ENCODE measurements at regions of chr7 and their contacts with region 1.

Region 1: GRCh38 chr7:123635551-123636359 is 19.9 kb upstream of the LMOD2 start:
- DNase-seq: peak; percentile 72
- H3K4me3 ChIP-seq: no peak overlapping the region; a peak in 1 of 4 replicates
- H3K27ac ChIP-seq: no peak overlapping the region
- H3K4me1 ChIP-seq: peaks cover 3 to 4% of the 10 kb centered on the region in 2 experiments; a peak in 2 of 4 replicates
- H3K27me3 ChIP-seq: no peaks in the 10 kb centered on the region
- CTCF ChIP-seq: peak; percentile 92
- EP300 ChIP-seq: no peak
- RAD21 ChIP-seq: peak; percentile 98

Region 2: GRCh38 chr7:123624527-123625183 is 11.1 kb before region 1 on chr7:
- CTCF ChIA-PET with region 1: interaction called, 20 read pairs
- POLR2A ChIA-PET with region 1: no interaction called
- DNase-seq: peak; percentile 35
- H3K4me3 ChIP-seq: 0 out of 4 replicates have a peak overlapping the region, but pooled peaks of 1 of the 2 experiments have one; percentile 25
- H3K27ac ChIP-seq: no peak overlapping the region
- H3K4me1 ChIP-seq: peaks cover 0 to 11% of the 10 kb centered on the region in 2 experiments; a peak in 2 of 4 replicates
- H3K27me3 ChIP-seq: no peaks in the 10 kb centered on the region
- CTCF ChIP-seq: peak; percentile 56
- EP300 ChIP-seq: no peak
- RAD21 ChIP-seq: peak; percentile 17; the same call in 1 of the 2 replicates

Region 3: DNA sequence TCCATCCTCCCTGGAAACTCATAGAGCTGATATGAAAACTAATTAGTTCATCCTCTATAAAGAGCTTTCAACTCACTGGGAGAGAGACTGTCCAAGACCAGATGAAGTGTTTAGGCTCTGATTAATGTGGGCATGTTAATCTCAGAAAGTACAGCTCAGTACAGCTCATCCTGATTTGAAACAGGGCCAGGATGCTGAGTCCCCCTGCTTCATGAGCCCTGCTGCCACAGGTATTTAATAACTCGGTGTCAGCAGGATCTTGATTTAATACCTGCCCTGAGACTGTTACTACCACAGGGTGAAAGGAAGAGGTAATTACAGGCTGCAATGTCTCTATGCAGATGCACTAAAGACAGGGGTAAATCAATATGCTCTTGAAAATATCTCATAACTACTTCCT is 30.7 kb after region 1 on chr7:
- CTCF ChIA-PET with region 1: interaction called, 17 read pairs
- POLR2A ChIA-PET with region 1: no interaction called
- DNase-seq: peak; percentile 30
- H3K4me3 ChIP-seq: no peak overlapping the region
- H3K27ac ChIP-seq: no peak overlapping the region
- H3K4me1 ChIP-seq: peaks cover 0 to 10% of the 10 kb centered on the region in 2 experiments; a peak in 2 of 4 replicates
- H3K27me3 ChIP-seq: no peaks in the 10 kb centered on the region
- CTCF ChIP-seq: no peak
- EP300 ChIP-seq: 0 out of 4 replicates have a peak, but pooled peaks of 1 of the 2 experiments have one; percentile 35
- RAD21 ChIP-seq: no peak

Region 4: DNA sequence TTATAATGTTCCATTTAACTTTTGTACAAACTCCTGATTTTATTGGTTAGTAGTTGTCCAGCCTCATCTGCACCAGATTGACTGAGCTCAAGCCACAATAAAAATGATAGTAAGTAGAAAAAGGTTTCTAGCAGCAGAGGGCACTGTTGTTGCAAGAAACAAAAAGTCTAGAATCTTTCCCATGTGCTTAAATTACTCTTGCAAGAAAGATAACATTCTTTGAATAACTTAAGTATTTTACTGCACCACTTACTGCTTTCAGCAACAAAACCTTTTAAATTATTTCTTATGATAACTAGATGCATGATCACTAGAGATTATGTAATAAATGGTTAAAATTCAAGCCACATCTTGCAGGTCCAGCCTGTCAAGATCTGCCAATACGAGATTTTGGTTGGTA is 46.9 kb after region 1 on chr7:
- CTCF ChIA-PET with region 1: interaction called, 29 read pairs
- POLR2A ChIA-PET with region 1: no interaction called
- DNase-seq: no peak
- H3K4me3 ChIP-seq: no peak overlapping the region
- H3K27ac ChIP-seq: peak overlapping the region in 1 of 2 experiments; percentile 43; a peak in 1 of 4 replicates
- H3K4me1 ChIP-seq: peaks cover 0 to 11% of the 10 kb centered on the region in 2 experiments; a peak in 2 of 4 replicates
- H3K27me3 ChIP-seq: no peaks in the 10 kb centered on the region
- CTCF ChIP-seq: peak; percentile 82
- EP300 ChIP-seq: no peak
- RAD21 ChIP-seq: peak; percentile 79

Region 5: GRCh38 chr7:123865517-123866117 is 229.9 kb after region 1 on chr7:
- CTCF ChIA-PET with region 1: interaction called, 61 read pairs
- POLR2A ChIA-PET with region 1: no interaction called
- DNase-seq: peak; percentile 49
- H3K4me3 ChIP-seq: no peak overlapping the region
- H3K27ac ChIP-seq: no peak overlapping the region
- H3K4me1 ChIP-seq: no peaks in the 10 kb centered on the region
- H3K27me3 ChIP-seq: no peaks in the 10 kb centered on the region; the same call in 1 of the 2 replicates
- CTCF ChIP-seq: peak; percentile 92
- EP300 ChIP-seq: no peak
- RAD21 ChIP-seq: peak; percentile 82

Region 6: DNA sequence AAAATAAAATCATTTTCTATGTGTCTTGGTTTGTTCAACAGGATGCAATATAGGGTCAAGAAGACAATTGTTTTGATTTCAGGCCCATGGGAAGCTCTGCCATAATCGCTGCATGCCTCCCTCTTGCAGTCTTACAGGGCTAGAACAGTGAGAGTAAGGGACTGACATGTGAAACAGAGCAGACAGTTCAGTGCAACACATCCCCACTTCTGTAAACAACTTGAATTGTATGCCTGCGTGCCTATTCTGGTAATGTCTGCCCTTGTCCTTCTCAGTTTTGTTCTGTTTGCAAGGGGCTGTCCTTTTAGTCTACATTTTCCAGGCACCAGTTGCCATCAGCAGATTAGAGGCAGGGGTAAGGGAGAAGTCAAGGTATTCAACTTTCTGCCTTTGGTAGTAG is 1164.6 kb after region 1 on chr7:
- CTCF ChIA-PET with region 1: no interaction called
- POLR2A ChIA-PET with region 1: no interaction called
- DNase-seq: no peak
- H3K4me3 ChIP-seq: no peak overlapping the region
- H3K27ac ChIP-seq: peak overlapping the region in 1 of 2 experiments; percentile 43; a peak in 1 of 4 replicates
- H3K4me1 ChIP-seq: peaks cover 0 to 6% of the 10 kb centered on the region in 2 experiments; a peak in 2 of 4 replicates
- H3K27me3 ChIP-seq: no peaks in the 10 kb centered on the region
- CTCF ChIP-seq: no peak
- EP300 ChIP-seq: no peak
- RAD21 ChIP-seq: no peak

Measured in SK-N-SH (cell line).